Heart left ventricle (tissue), 16 donors: ENCODE measurements at regions of chr5 and their contacts with region 1.

Region 1: GRCh38 chr5:149852641-149853330 is 91.8 kb downstream of the PDE6A start:
- DNase-seq: peak; percentile 72 to 80 (median 76)
- ATAC-seq: peak in 2 of 4 donors; percentile 44 to 59
- H3K4me3 ChIP-seq: no peak overlapping the region
- H3K27ac ChIP-seq: peak overlapping the region in 5 of 12 donors; percentile 3 to 88 (median 48)
- H3K4me1 ChIP-seq: peaks cover 0 to 20% (median 14%) of the 10 kb centered on the region in 12 donors
- H3K27me3 ChIP-seq: no peaks in the 10 kb centered on the region
- CTCF ChIP-seq: peak; percentile 72 to 93 (median 83)
- POLR2A ChIP-seq: no peak

Region 2: DNA sequence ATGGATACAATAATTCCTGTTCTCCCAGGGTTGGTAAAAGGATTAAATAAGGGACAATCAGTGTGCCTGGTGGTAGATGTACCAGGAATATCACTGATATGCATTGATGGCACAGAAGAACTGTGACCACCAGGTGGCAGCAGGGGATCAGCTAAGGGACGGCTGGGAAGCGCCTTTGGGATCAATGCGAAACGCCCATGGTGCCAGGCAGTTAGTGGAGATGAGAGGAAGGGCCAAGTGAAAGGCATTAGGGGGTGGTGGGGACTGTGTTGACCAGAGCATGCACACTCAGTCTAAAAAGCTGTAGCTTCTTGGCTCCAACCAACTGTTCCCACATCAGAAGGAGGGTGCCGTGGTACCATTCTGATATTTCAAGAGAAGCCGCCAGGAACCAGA is 215.9 kb before region 1 on chr5:
- intact Hi-C with region 1: loop called in 9 of 10 experiments (anchors 1 to 5 kb)
- DNase-seq: peak in 3 of 5 donors; percentile 87 to 93 (median 92)
- ATAC-seq: peak; percentile 51 to 68 (median 64)
- H3K4me3 ChIP-seq: no peak overlapping the region
- H3K27ac ChIP-seq: no peak overlapping the region
- H3K4me1 ChIP-seq: peaks cover 0 to 38% (median 27%) of the 10 kb centered on the region in 12 donors
- H3K27me3 ChIP-seq: no peaks in the 10 kb centered on the region
- CTCF ChIP-seq: peak; percentile 62 to 94 (median 84)
- POLR2A ChIP-seq: no peak

Region 3: DNA sequence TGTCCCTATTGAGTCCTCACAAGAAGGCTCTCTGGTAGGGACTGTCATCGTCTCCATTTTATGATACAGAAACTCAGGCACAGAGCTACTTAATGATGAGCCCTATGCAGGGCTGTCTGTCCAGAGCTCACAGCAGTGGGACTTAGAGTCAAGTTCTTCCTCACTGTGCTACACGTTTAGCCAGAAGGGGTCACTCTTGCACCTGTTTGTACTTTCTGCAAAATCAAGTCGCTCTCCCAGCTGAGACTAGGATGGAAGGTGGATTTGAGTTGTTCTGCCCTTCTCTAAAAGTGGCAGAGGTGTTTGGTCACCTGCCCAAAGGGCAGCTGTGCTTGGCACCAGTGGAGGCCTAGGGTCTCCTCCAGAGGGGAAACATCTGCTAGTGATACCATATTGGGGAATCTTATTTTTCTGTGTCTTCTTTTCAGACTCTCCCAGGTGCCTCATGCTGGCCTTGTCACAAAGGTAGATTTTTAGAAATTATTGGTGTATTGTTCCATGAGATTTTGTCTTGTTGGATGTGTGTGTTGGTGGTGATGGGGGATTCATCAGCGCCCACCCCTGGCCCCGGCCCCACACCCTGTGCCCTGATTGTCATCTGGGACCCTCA is 18.4 kb before region 1 on chr5:
- intact Hi-C with region 1: loop called in 1 of 10 experiments (anchors 2 kb)
- DNase-seq: peak in 1 of 5 donors; percentile 56
- ATAC-seq: peak in 3 of 4 donors; percentile 24 to 44 (median 32)
- H3K4me3 ChIP-seq: no peak overlapping the region
- H3K27ac ChIP-seq: peak overlapping the region in 3 of 12 donors; percentile 5 to 39 (median 9)
- H3K4me1 ChIP-seq: peaks cover 0 to 29% (median 9%) of the 10 kb centered on the region in 12 donors
- H3K27me3 ChIP-seq: no peaks in the 10 kb centered on the region
- CTCF ChIP-seq: peak; percentile 28 to 74 (median 58)
- POLR2A ChIP-seq: no peak

Region 4: GRCh38 chr5:149960272-149961185 is 107.7 kb after region 1 on chr5 and contains the start of gene SLC26A2:
- intact Hi-C with region 1: loop called in 4 of 10 experiments (anchors 5 kb)
- DNase-seq: peak; percentile 98
- ATAC-seq: peak; percentile 99 to 100 (median 100)
- H3K4me3 ChIP-seq: peak within 1 kb of the TSS; percentile 51 to 96 (median 72)
- H3K27ac ChIP-seq: peak within 1 kb of the TSS; percentile 49 to 93 (median 87)
- H3K4me1 ChIP-seq: peaks cover 0 to 22% (median 14%) of the 10 kb centered on the region in 12 donors
- H3K27me3 ChIP-seq: no peaks in the 10 kb centered on the region
- CTCF ChIP-seq: no peak
- POLR2A ChIP-seq: peak in 1 of 2 donors; percentile 96
- total RNA-seq, gene SLC26A2: 3.5 to 14.7 (median 6.8) TPM

Region 5: GRCh38 chr5:149979896-149980295 is 127.1 kb after region 1 on chr5:
- intact Hi-C with region 1: loop called in 2 of 10 experiments (anchors 5 kb)
- DNase-seq: no peak
- ATAC-seq: no peak
- H3K4me3 ChIP-seq: no peak overlapping the region
- H3K27ac ChIP-seq: no peak overlapping the region
- H3K4me1 ChIP-seq: no peaks in the 10 kb centered on the region
- H3K27me3 ChIP-seq: no peaks in the 10 kb centered on the region
- CTCF ChIP-seq: no peak
- POLR2A ChIP-seq: no peak

Region 6: DNA sequence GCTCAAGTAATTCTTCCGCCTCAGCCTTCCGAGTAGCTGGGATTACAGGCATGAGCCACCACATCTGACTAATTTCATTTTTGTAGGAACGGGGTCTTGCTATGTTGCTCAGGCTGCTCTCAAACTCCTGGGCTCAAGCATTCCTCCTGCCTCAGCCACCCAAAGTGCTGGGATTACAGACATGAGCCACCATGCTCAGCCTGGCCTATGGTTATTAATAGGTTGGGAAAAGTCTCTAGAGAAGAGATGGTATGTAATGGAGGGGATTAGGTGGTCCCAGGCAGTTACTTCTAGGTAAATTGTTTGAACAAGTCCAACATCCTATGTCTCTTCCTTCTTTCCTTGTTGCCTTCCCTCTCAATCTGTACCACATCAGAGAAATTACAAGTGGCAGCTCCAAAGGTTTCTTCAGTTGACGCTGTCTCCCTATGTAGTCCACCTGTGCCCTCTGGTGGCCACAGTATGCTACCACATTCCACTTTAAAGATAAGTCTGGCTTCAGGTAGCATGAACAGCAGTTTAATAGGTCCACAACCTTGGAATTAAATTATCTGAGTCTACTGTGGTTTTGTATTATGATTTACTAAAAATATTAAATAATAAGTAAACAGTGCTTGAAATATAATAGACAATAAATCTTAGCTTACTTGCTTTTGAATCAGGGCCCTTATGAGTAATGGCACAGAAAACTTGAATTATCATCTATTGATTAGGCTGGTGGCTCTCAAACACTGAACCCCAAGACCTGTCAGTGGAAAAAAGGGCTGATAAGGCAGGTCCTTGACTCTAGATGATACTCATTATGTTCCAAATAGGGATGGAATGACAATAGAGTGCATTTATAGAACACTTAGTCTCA is 138.0 kb after region 1 on chr5:
- intact Hi-C with region 1: loop called in 3 of 10 experiments (anchors 5 to 10 kb)
- DNase-seq: peak in 4 of 5 donors; percentile 51 to 73 (median 60)
- ATAC-seq: peak in 3 of 4 donors; percentile 74 to 82 (median 82)
- H3K4me3 ChIP-seq: no peak overlapping the region
- H3K27ac ChIP-seq: no peak overlapping the region
- H3K4me1 ChIP-seq: peaks cover 0 to 16% (median 0%) of the 10 kb centered on the region in 12 donors
- H3K27me3 ChIP-seq: no peaks in the 10 kb centered on the region
- CTCF ChIP-seq: peak; percentile 87 to 96 (median 94)
- POLR2A ChIP-seq: no peak

Region 7: DNA sequence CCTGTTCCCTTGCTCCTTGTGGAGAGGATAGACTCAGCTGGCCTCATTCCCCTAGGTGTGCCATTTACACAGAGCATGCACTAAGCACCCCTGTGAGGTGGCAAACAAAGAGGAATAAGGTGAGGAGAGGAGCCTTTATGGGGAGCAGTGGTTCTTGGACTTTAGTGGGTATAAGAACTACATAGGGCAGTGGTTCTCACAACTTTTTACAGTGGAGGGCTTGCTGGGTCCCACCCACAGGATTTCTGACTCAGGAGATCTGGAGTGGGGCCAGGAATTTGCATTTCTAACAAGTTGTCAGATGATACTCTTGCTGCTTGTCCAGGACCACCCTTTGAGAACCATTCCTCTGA is 191.5 kb after region 1 on chr5:
- intact Hi-C with region 1: no loop called
- DNase-seq: no peak
- ATAC-seq: peak in 3 of 4 donors; percentile 12 to 22 (median 16)
- H3K4me3 ChIP-seq: no peak overlapping the region
- H3K27ac ChIP-seq: peak overlapping the region in 9 of 12 donors; percentile 1 to 71 (median 27)
- H3K4me1 ChIP-seq: peaks cover 6 to 44% (median 31%) of the 10 kb centered on the region in 12 donors
- H3K27me3 ChIP-seq: no peaks in the 10 kb centered on the region
- CTCF ChIP-seq: no peak
- POLR2A ChIP-seq: no peak